CD8-positive, alpha-beta T cell (primary cell): ENCODE measurements at regions of chr9 and their contacts with region 1.

Region 1: DNA sequence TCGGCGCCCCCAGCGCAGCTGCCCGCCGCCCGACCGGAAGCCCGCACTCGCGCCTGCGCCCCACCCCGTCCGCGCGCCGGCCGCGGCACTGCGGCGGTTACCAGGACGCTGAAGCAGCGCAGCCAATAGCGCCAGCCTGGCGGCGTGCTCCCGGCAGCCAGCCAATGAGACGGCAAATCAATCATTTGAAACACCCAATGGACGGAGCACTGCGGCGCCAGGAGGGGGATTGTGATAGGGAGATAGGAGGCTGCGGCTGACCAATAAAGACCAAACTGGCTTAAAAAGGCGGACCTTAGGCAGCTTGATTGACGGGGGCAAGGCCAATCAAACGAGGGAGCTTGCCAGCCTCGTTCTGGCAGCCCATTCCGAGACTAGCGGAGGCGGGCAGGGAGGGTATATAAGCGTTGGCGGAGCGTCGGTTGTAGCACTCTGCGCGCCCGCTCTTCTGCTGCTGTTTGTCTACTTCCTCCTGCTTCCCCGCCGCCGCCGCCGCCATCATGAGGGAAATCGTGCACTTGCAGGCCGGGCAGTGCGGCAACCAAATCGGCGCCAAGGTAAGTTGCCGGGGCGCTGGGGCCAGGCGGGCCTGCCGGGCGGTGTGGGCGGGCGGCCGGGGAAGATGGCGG is at the start of gene TUBB4B:
- DNase-seq: peak; percentile 93 to 100 (median 97)
- ATAC-seq: peak; percentile 78
- H3K4me3 ChIP-seq: peak within 1 kb of the TSS; percentile 59 to 68
- H3K4me3 Mint-ChIP-seq: peak within 1 kb of the TSS; percentile 91
- H3K27ac ChIP-seq: peak within 1 kb of the TSS; percentile 73 to 85
- H3K27ac Mint-ChIP-seq: peak within 1 kb of the TSS; percentile 93
- H3K4me1 ChIP-seq: peaks cover 37% of the 10 kb centered on the region
- H3K4me1 Mint-ChIP-seq: peaks cover 25% of the 10 kb centered on the region
- H3K27me3 ChIP-seq: no peaks in the 10 kb centered on the region
- H3K27me3 Mint-ChIP-seq: no peaks in the 10 kb centered on the region
- CTCF ChIP-seq: no peak
- total RNA-seq, gene TUBB4B: 114 to 120 TPM

Region 2: GRCh38 chr9:137086531-137087408 is 154.2 kb before region 1 on chr9 and contains the start of gene MAN1B1:
- CTCF ChIA-PET with region 1: interaction called, 4 read pairs
- POLR2A ChIA-PET with region 1: interaction called, 21 read pairs
- intact Hi-C with region 1: loop called in 1 of 2 experiments (anchors 2 kb)
- DNase-seq: peak; percentile 98 to 100 (median 99)
- ATAC-seq: peak; percentile 84
- H3K4me3 ChIP-seq: peak within 1 kb of the TSS; percentile 76 to 88
- H3K4me3 Mint-ChIP-seq: peak within 1 kb of the TSS; percentile 88
- H3K27ac ChIP-seq: peak within 1 kb of the TSS; percentile 84 to 90
- H3K27ac Mint-ChIP-seq: peak within 1 kb of the TSS; percentile 95
- H3K4me1 ChIP-seq: peaks cover 24% of the 10 kb centered on the region
- H3K4me1 Mint-ChIP-seq: peaks cover 23% of the 10 kb centered on the region
- H3K27me3 ChIP-seq: no peaks in the 10 kb centered on the region
- H3K27me3 Mint-ChIP-seq: no peaks in the 10 kb centered on the region
- CTCF ChIP-seq: no peak
- total RNA-seq, gene MAN1B1: 60.3 to 62.9 TPM

Region 3: GRCh38 chr9:137129456-137130175 is 111.4 kb before region 1 on chr9:
- CTCF ChIA-PET with region 1: interaction called, 10 read pairs
- POLR2A ChIA-PET with region 1: interaction called, 12 read pairs
- intact Hi-C with region 1: no loop called
- DNase-seq: peak; percentile 71 to 96 (median 88)
- ATAC-seq: peak; percentile 92
- H3K4me3 ChIP-seq: peak overlapping the region; percentile 70 to 83
- H3K4me3 Mint-ChIP-seq: peak overlapping the region; percentile 87
- H3K27ac ChIP-seq: peak overlapping the region; percentile 62 to 78
- H3K27ac Mint-ChIP-seq: peak overlapping the region; percentile 91
- H3K4me1 ChIP-seq: peaks cover 35% of the 10 kb centered on the region
- H3K4me1 Mint-ChIP-seq: peaks cover 28% of the 10 kb centered on the region
- H3K27me3 ChIP-seq: peaks cover 0 to 17% of the 10 kb centered on the region in 2 experiments
- H3K27me3 Mint-ChIP-seq: peaks cover 9% of the 10 kb centered on the region
- CTCF ChIP-seq: no peak

Region 4: DNA sequence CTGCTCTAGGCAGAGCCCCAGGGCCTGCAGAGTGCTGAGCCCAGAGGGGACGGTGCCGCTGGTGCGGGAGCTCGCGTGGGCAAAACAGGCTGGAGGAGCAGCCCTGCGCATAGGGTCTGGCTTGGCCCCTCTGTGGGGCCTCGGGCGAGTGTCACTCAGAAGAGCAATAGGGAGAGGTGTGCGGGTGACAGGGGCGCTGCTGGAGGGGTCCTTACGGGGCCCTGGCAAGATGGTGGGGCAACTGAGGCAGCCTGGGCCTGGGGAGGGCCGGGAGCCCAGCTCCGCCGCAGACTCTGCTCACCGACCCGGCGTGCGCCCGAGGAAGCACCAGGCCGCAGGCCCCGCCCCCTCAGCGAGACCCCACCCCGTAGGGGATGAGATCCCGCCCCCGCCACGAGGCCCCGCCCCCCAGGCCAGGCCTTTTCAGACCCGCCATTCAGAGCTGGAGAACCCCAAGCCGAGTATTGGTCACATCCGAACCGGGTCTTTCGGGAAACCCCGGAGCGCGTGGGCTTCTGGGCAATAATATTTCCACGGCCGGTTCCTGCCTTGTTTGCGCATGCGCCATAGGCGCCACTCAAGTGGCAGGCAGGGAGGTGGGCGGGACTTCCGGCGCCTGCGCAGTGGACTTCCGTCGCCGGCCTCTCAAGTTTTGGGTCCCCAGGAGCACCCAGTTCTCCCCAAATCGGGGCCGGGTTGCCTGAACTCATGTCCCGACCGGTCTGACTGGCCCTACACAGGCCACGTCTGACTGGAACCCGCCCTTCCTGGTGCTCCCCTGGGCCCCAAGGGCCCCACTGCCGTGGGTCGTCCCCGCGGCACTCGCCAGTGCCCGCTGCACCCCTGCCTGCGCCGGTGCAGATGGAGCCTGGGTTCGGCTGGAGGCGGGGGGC is 17.7 kb before region 1 on chr9:
- CTCF ChIA-PET with region 1: interaction called, 20 read pairs
- POLR2A ChIA-PET with region 1: interaction called, 28 read pairs
- intact Hi-C with region 1: loop called (anchors 1 kb)
- DNase-seq: peak; percentile 95 to 99 (median 97)
- ATAC-seq: peak; percentile 93
- H3K4me3 ChIP-seq: peak overlapping the region; percentile 75 to 88
- H3K4me3 Mint-ChIP-seq: peak overlapping the region; percentile 83
- H3K27ac ChIP-seq: peak overlapping the region; percentile 69 to 86
- H3K27ac Mint-ChIP-seq: peak overlapping the region; percentile 81
- H3K4me1 ChIP-seq: peaks cover 19% of the 10 kb centered on the region
- H3K4me1 Mint-ChIP-seq: peaks cover 8% of the 10 kb centered on the region
- H3K27me3 ChIP-seq: peaks cover 0 to 5% of the 10 kb centered on the region in 2 experiments
- H3K27me3 Mint-ChIP-seq: peaks cover 3% of the 10 kb centered on the region
- CTCF ChIP-seq: no peak

Region 5: DNA sequence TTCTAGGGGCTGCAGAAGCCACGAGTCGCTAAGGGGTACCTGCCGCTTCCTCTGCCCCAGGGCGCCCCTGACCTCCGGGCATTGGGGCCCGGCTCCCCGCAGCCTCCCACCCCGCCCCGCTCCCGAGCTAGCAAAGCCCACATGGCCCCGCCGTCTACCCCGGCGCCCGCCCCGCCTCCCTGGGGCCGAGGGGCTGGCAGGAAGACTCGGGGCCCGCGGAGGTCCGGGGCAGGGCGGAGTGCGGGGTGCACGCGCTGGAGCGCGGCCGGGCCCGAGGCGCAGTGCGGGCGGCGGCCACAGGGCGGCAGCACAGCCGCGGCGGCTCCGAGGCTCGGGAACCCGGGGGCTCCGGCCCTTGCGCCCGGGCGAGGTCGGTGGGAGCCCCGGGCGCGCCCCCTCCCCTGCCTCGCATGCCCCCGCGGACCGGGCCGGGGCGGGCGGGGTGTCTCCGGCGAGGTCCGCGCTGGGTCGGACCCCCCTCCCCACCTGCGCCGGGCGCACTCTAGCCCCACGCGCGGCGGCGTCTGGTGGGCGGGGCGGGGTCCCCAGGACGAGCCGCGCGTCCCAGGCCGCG is 54.4 kb after region 1 on chr9:
- CTCF ChIA-PET with region 1: no interaction called
- POLR2A ChIA-PET with region 1: no interaction called
- intact Hi-C with region 1: loop called in 1 of 2 experiments (anchors 2 kb)
- DNase-seq: peak in 7 of 9 experiments; percentile 22 to 71 (median 53)
- ATAC-seq: peak; percentile 91
- H3K4me3 ChIP-seq: peak overlapping the region in 1 of 2 experiments; percentile 48
- H3K4me3 Mint-ChIP-seq: peak overlapping the region; percentile 26
- H3K27ac ChIP-seq: no peak overlapping the region
- H3K27ac Mint-ChIP-seq: no peak overlapping the region
- H3K4me1 ChIP-seq: peaks cover 12% of the 10 kb centered on the region
- H3K4me1 Mint-ChIP-seq: peaks cover 8% of the 10 kb centered on the region
- H3K27me3 ChIP-seq: peaks cover 35% of the 10 kb centered on the region in 2 experiments
- H3K27me3 Mint-ChIP-seq: peaks cover 35% of the 10 kb centered on the region
- CTCF ChIP-seq: peak; percentile 63

Region 6: DNA sequence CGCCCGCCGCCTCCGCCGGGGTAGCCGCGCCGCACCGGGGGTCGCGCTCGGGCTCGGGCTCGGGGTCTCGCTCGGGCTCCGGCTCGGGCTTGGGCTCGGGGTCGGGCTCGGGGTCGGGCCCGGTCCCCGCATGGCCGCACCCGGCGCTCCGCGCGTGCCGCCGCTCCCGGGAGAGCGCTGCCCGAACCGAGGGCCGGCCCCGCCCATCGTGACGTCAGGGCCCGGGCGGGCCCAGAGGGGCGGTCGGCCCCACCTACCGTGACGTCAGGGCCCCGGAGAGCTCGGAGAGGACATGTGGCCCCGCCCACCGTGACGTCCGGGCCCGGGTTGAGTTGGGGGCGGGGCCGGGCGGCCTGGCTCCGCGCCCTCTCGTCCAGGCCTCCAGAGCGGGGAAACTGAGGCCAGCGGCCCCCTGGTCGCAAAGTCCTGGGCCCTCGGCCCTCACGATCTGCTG is 218.2 kb after region 1 on chr9 and contains the start of gene NSMF:
- CTCF ChIA-PET with region 1: no interaction called
- POLR2A ChIA-PET with region 1: no interaction called
- intact Hi-C with region 1: loop called in 1 of 2 experiments (anchors 2 kb)
- DNase-seq: peak in 8 of 9 experiments; percentile 87 to 97 (median 92)
- ATAC-seq: peak; percentile 71
- H3K4me3 ChIP-seq: peak within 1 kb of the TSS; percentile 49 to 54
- H3K4me3 Mint-ChIP-seq: peak within 1 kb of the TSS; percentile 69
- H3K27ac ChIP-seq: peak within 1 kb of the TSS; percentile 71 to 80
- H3K27ac Mint-ChIP-seq: peak within 1 kb of the TSS; percentile 79
- H3K4me1 ChIP-seq: peaks cover 72% of the 10 kb centered on the region
- H3K4me1 Mint-ChIP-seq: peaks cover 44% of the 10 kb centered on the region
- H3K27me3 ChIP-seq: no peaks in the 10 kb centered on the region
- H3K27me3 Mint-ChIP-seq: no peaks in the 10 kb centered on the region
- CTCF ChIP-seq: no peak
- total RNA-seq, gene NSMF: 82.8 to 87.2 TPM